Endothelial cell of umbilical vein (primary cell): ENCODE measurements at regions of chr14 and their contacts with region 1.

Region 1: DNA sequence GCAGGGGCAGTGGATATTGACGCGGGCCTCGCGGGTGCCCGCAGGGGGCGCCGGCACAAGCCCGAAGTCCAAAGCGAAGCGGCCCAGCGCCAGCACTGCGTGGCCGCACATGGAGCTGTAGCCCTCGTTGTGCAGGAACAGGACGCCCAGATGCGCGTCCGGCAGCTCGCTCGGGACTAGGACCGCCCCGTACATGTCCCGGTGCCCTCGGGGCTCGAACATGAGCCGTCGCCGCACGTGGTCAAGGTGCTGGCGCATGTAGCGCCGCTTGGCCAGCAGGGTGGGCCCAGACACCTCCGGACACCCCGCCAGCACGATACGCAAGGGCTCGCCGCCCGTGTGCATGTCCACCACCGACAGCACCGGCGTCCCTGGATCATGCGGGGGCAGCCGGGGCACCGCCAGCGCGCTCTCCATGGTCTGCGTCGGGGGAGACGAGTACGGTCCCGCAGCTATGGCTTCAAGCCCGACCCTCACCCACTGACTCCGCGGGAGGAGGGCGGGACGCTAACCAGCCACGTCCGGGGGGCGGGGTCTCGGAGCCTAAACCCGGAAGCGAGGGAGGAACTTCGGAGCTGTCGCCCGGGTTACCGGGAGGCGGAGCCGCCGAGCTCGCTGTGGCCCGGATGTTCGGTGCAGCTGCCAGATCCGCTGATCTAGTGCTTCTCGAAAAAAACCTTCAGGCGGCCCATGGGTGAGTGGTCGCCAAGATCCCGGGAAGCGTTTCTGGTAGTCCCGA is at the starts of genes JKAMP and L3HYPDH:
- DNase-seq: peak; percentile 96
- H3K4me3 ChIP-seq: peak within 1 kb of the TSS; percentile 70 to 98 (median 96)
- H3K27ac ChIP-seq: peak within 1 kb of the TSS; percentile 80
- H3K4me1 ChIP-seq: peaks cover 31% of the 10 kb centered on the region
- H3K27me3 ChIP-seq: no peaks in the 10 kb centered on the region
- CTCF ChIP-seq: peak; percentile 62 to 85
- POLR2A ChIP-seq: peak; percentile 92
- total RNA-seq, gene JKAMP: 30.8 and 39.8 TPM in 2 replicates
- total RNA-seq, gene L3HYPDH: 30.2 and 31.0 TPM in 2 replicates

Region 2: GRCh38 chr14:58427281-58428117 is 1056.6 kb before region 1 on chr14 and contains the starts of genes KIAA0586 and TIMM9:
- CTCF ChIA-PET with region 1: no interaction called
- POLR2A ChIA-PET with region 1: no interaction called
- dilution Hi-C with region 1: no loop called
- intact Hi-C with region 1: loop called (anchors 1 kb)
- DNase-seq: peak; percentile 98
- H3K4me3 ChIP-seq: peak within 1 kb of the TSS; percentile 72 to 96 (median 85)
- H3K27ac ChIP-seq: peak within 1 kb of the TSS; percentile 95
- H3K4me1 ChIP-seq: peaks cover 21% of the 10 kb centered on the region
- H3K27me3 ChIP-seq: no peaks in the 10 kb centered on the region
- CTCF ChIP-seq: no peak
- POLR2A ChIP-seq: peak; percentile 88
- total RNA-seq, gene KIAA0586: 25.9 and 29.2 TPM in 2 replicates
- total RNA-seq, gene TIMM9: 38.0 and 42.4 TPM in 2 replicates

Region 3: GRCh38 chr14:59189786-59190771 is 294.0 kb before region 1 on chr14:
- CTCF ChIA-PET with region 1: no interaction called
- POLR2A ChIA-PET with region 1: interaction called, 7 read pairs
- dilution Hi-C with region 1: no loop called
- intact Hi-C with region 1: loop called (anchors 1 kb)
- DNase-seq: peak; percentile 80
- H3K4me3 ChIP-seq: peak overlapping the region; percentile 77 to 85 (median 78)
- H3K27ac ChIP-seq: peak overlapping the region; percentile 72
- H3K4me1 ChIP-seq: peaks cover 13% of the 10 kb centered on the region
- H3K27me3 ChIP-seq: peaks cover 11 to 24% of the 10 kb centered on the region in 2 experiments
- CTCF ChIP-seq: no peak
- POLR2A ChIP-seq: no peak

Region 4: GRCh38 chr14:59407246-59408010 is 76.6 kb before region 1 on chr14:
- CTCF ChIA-PET with region 1: no interaction called
- POLR2A ChIA-PET with region 1: no interaction called
- dilution Hi-C with region 1: no loop called
- intact Hi-C with region 1: loop called (anchors 2 kb)
- DNase-seq: peak; percentile 84
- H3K4me3 ChIP-seq: peak overlapping the region in 1 of 3 experiments; percentile 12
- H3K27ac ChIP-seq: peak overlapping the region; percentile 92
- H3K4me1 ChIP-seq: peaks cover 21% of the 10 kb centered on the region
- H3K27me3 ChIP-seq: no peaks in the 10 kb centered on the region
- CTCF ChIP-seq: no peak
- POLR2A ChIP-seq: no peak

Region 5: DNA sequence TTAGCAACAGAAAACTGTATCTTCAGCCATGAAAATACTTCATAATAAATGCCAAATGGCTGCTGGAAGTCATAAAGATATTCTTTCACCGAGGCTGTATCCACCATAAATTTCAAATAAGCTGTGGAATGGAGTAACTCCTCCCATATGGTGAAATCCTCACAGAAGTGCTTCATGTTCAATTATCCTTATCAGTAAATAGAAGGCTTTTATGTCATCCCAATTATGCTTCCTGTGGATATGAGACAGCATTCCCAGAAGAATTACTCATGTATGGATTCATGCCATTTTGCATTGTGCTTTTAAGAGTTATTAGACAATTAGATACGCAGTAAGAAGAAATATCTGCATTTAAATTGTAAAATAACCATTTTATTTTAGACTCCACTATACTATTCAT is 287.5 kb after region 1 on chr14:
- CTCF ChIA-PET with region 1: no interaction called
- POLR2A ChIA-PET with region 1: no interaction called
- dilution Hi-C with region 1: no loop called
- intact Hi-C with region 1: loop called (anchors 1 kb)
- DNase-seq: peak; percentile 70
- H3K4me3 ChIP-seq: peak overlapping the region in 1 of 3 experiments; percentile 43
- H3K27ac ChIP-seq: peak overlapping the region; percentile 95
- H3K4me1 ChIP-seq: peaks cover 22% of the 10 kb centered on the region
- H3K27me3 ChIP-seq: peaks cover 0 to 25% of the 10 kb centered on the region in 2 experiments
- CTCF ChIP-seq: no peak
- POLR2A ChIP-seq: no peak

Region 6: GRCh38 chr14:60248697-60249318 is 764.7 kb after region 1 on chr14 and contains the start of gene PPM1A:
- CTCF ChIA-PET with region 1: no interaction called
- POLR2A ChIA-PET with region 1: no interaction called
- dilution Hi-C with region 1: no loop called
- intact Hi-C with region 1: loop called (anchors 5 kb)
- DNase-seq: peak; percentile 96
- H3K4me3 ChIP-seq: peak within 1 kb of the TSS; percentile 81 to 98 (median 96)
- H3K27ac ChIP-seq: peak within 1 kb of the TSS; percentile 85
- H3K4me1 ChIP-seq: peaks cover 26% of the 10 kb centered on the region
- H3K27me3 ChIP-seq: no peaks in the 10 kb centered on the region
- CTCF ChIP-seq: no peak
- POLR2A ChIP-seq: peak; percentile 65
- total RNA-seq, gene PPM1A: 33.9 and 36.4 TPM in 2 replicates